ENCODE measurements at regions of chr4 and their contacts with region 1.

Region 1: GRCh38 chr4:82721819-82722423 is 76.7 kb downstream of the SCD5 start:
- DNase-seq: peak; percentile 47
- H3K4me3 Mint-ChIP-seq: no peak overlapping the region
- H3K27ac Mint-ChIP-seq: no peak overlapping the region
- H3K4me1 Mint-ChIP-seq: no peaks in the 10 kb centered on the region
- H3K27me3 Mint-ChIP-seq: peaks cover 9% of the 10 kb centered on the region

Region 2: DNA sequence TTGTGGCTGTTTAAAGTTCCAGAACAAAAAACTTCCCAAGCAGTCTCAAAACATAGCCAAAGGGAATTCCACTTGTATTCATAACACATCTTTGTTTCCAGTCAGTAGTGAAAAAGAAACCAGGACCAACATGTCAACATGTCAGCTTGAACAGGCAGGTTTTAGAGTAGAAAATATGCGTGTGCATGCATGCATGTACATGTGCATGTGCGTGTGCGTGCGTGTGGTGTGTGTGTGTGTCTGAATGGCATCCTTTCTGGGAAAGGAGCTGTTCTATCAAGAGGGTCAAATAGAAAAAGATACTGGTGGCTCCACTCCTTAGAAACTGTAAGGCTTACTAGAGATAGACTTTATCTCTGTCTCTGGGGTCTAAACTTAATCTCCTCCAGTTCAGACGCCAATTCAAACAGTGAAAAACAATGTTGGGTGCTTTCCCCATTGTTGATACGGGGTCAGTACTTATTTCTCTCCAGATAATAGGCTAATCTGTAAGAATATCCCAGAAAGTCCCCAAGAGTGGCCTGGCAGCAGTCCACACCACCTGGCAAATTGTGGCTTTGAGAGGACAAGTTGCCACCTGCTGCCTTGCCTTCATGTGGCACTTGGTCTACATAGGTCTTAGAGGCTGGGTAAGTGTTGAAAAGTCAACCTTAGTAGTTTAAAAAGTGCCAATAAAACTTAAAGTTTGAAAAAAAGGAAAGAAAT is 33.7 kb before region 1 on chr4:
- CTCF ChIA-PET with region 1: no interaction called
- DNase-seq: no peak
- H3K4me3 Mint-ChIP-seq: no peak overlapping the region
- H3K27ac Mint-ChIP-seq: no peak overlapping the region
- H3K4me1 Mint-ChIP-seq: no peaks in the 10 kb centered on the region
- H3K27me3 Mint-ChIP-seq: peaks cover 7% of the 10 kb centered on the region

Region 3: DNA sequence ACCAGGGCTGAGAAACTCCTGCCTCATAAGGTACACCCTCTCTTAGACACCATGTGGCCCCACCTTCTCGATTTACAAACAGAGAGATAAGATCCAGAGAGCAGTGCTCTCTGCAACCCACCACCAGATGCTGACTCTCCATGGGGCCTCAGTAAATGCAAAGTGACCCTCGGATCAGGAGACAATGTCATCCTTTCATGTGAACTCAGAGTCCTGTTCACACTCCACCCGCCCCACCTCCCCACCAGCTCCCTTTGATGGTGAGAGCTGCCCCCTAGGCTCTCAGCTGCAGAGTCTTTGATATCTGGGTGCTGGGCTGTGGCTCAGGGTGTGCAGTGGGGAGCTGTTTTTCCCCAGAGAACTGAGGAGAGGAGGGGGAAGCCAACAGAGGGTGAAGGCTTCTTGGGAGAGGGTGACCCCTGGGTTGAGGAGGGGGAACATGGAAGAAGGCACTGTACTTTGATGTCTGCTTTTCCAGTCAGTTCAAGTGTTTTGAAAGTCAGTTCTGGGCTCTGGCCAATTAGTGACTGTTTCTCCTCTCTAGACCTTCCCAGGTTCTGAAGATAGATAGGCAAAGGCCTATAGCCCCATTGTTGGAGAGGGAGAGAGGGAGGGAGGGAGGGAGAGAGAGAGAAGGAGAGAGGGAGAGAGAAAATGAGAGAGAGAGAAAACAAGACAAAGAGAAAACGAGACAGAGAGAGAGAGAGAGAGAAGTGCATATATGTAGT is 11.6 kb before region 1 on chr4:
- CTCF ChIA-PET with region 1: interaction called, 12 read pairs
- DNase-seq: no peak
- H3K4me3 Mint-ChIP-seq: no peak overlapping the region
- H3K27ac Mint-ChIP-seq: no peak overlapping the region
- H3K4me1 Mint-ChIP-seq: no peaks in the 10 kb centered on the region
- H3K27me3 Mint-ChIP-seq: peaks cover 30% of the 10 kb centered on the region

Measured in activated naive CD4-positive, alpha-beta T cell treated with anti-CD3 and anti-CD28 coated beads, Interleukin-2, amount 10 ng/mL, durations not matched to agents 7 days and 5 days (primary cell).